Caco-2 (cell line): ENCODE measurements at regions of chr11 and their contacts with region 1.

Region 1: GRCh38 chr11:67583247-67584204 is at the start of gene GSTP1:
- DNase-seq: peak; percentile 93 to 98
- H3K4me3 ChIP-seq: peak within 1 kb of the TSS; percentile 87
- H3K4me3 Mint-ChIP-seq: peak within 1 kb of the TSS; percentile 75
- H3K27ac Mint-ChIP-seq: peak within 1 kb of the TSS; percentile 85
- H3K4me1 ChIP-seq: peaks cover 48% of the 10 kb centered on the region
- H3K4me1 Mint-ChIP-seq: peaks cover 61% of the 10 kb centered on the region
- H3K27me3 ChIP-seq: no peaks in the 10 kb centered on the region
- H3K27me3 Mint-ChIP-seq: no peaks in the 10 kb centered on the region
- CTCF ChIP-seq: peak; percentile 62 to 93
- total RNA-seq, gene GSTP1: 1,799 and 1,911 TPM in 2 replicates

Region 2: DNA sequence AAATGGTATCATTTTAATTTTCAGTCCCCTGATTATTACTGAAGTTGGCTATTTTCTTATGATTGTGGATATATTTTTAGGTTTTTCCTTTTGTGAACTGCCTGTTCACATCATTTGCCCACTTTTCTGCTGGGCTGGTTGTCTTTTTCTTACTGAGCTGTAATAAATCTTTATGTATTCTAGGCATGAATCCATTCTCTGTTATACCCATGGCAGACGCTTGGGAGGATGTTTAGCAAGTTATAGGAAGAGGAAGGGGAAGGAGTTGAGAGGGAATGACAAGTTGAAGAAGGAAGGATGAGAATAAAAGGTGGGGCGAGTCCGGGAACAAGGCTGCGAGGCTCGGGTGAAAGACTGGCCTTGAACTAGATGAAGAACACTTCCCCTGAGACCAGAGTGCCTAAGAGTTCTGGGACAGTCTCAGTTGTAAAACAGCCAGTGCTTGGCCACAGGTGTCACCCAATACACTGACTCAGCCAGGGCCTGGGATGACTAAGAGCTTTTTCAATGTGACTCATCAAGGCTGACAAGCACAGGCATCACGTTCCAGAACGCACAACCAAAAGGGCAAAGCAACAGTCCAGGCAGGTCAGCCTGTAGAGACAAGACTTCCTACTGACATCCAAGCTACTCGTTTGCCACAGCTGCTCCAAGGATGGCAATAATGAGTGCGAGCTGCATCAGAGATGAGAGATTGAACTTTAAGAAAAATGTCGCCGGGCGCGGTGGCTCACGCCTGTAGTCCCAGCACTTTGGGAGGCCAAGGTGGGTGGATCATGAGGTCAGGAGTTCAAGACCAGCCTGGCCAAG is 691.5 kb before region 1 on chr11:
- CTCF ChIA-PET with region 1: no interaction called
- POLR2A ChIA-PET with region 1: no interaction called
- intact Hi-C with region 1: no loop called
- DNase-seq: peak; percentile 72 to 88
- H3K4me3 ChIP-seq: no peak overlapping the region
- H3K4me3 Mint-ChIP-seq: no peak overlapping the region
- H3K27ac Mint-ChIP-seq: peak overlapping the region; percentile 6
- H3K4me1 ChIP-seq: peaks cover 10% of the 10 kb centered on the region
- H3K4me1 Mint-ChIP-seq: peaks cover 10% of the 10 kb centered on the region
- H3K27me3 ChIP-seq: no peaks in the 10 kb centered on the region
- H3K27me3 Mint-ChIP-seq: no peaks in the 10 kb centered on the region
- CTCF ChIP-seq: no peak

Region 3: GRCh38 chr11:67563354-67564114 is 20.0 kb before region 1 on chr11:
- CTCF ChIA-PET with region 1: interaction called, 6 read pairs
- POLR2A ChIA-PET with region 1: interaction called, 8 read pairs
- intact Hi-C with region 1: loop called (anchors 1 kb)
- DNase-seq: peak; percentile 89 to 96
- H3K4me3 ChIP-seq: no peak overlapping the region
- H3K4me3 Mint-ChIP-seq: peak overlapping the region; percentile 59
- H3K27ac Mint-ChIP-seq: peak overlapping the region; percentile 95
- H3K4me1 ChIP-seq: peaks cover 33% of the 10 kb centered on the region
- H3K4me1 Mint-ChIP-seq: peaks cover 32% of the 10 kb centered on the region
- H3K27me3 ChIP-seq: no peaks in the 10 kb centered on the region
- H3K27me3 Mint-ChIP-seq: no peaks in the 10 kb centered on the region
- CTCF ChIP-seq: no peak

Region 4: GRCh38 chr11:67606492-67607201 is 23.1 kb after region 1 on chr11 and contains the start of gene NDUFV1:
- CTCF ChIA-PET with region 1: no interaction called
- POLR2A ChIA-PET with region 1: no interaction called
- intact Hi-C with region 1: loop called (anchors 1 kb)
- DNase-seq: peak; percentile 98 to 100
- H3K4me3 ChIP-seq: peak within 1 kb of the TSS; percentile 80
- H3K4me3 Mint-ChIP-seq: peak within 1 kb of the TSS; percentile 82
- H3K27ac Mint-ChIP-seq: peak within 1 kb of the TSS; percentile 91
- H3K4me1 ChIP-seq: peaks cover 10% of the 10 kb centered on the region; the same call in 1 of the 2 replicates
- H3K4me1 Mint-ChIP-seq: no peaks in the 10 kb centered on the region
- H3K27me3 ChIP-seq: no peaks in the 10 kb centered on the region
- H3K27me3 Mint-ChIP-seq: no peaks in the 10 kb centered on the region
- CTCF ChIP-seq: peak; percentile 86 to 88
- total RNA-seq, gene NDUFV1: 358 and 375 TPM in 2 replicates